GM13976 (cell line): ENCODE measurements at regions of chrX and their contacts with region 1.

Region 1: DNA sequence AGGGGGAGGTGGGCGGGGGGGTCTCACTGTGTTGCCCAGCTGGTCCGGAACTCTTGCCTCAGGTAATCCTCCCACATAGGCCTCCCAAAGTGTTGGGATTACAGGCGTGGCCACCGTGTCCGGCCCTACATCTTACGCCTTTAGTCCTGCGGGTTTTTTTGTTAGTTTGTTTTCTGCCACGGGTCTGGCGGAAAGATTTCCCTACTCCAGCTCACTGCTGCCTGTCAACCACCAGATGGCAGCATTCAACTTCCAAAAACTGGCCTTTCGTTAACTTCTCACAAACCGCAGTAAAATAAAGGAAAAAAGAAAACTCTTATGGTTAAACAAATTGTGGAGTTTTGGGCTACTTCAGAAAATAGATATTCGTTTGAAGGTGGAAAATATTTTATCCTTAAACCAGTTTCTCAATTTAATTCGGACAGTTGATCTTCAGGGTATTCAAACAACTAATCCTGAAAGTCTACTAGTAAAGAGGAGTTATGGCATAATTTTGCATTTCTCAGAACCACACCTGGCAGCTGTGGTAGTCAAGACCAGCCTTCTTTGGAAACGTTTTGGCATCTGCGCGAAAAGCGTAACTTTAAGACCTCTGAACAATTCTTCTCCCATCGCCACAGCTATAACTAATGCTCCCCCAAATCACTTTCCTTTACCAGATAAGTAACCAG is 41.1 kb downstream of the LUZP4 start:
- DNase-seq: peak; percentile 60
- CTCF ChIP-seq: peak; percentile 69

Region 2: DNA sequence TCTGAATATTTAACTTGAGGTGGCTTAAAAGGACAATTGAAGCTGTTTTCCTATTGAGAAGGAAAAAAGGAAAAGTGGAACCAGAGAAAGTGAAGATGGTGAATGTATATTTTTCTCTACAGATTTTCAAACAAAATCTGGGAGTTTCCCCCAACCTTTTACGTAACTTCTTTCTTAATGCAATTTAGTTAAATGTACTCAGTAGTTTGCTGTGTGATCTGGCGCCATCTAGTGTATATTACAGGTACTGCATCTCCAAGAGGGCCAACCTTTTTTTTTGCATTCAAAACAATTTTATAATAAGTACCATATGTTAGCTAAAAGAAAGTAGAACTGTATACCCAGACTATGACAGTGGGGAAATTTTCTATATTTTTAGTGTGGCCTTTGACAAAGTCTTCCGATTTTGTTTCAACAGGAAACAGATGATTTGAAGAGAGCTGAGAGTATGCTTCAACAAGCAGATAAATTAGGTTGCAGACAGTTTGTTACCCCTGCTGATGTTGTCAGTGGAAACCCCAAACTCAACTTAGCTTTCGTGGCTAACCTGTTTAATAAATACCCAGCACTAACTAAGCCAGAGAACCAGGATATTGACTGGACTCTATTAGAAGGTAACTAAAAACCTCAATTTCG is 312.4 kb after region 1 on chrX:
- in situ Hi-C with region 1: loop called (anchors 10 kb)
- DNase-seq: peak; percentile 40
- CTCF ChIP-seq: peak; percentile 88

Region 3: DNA sequence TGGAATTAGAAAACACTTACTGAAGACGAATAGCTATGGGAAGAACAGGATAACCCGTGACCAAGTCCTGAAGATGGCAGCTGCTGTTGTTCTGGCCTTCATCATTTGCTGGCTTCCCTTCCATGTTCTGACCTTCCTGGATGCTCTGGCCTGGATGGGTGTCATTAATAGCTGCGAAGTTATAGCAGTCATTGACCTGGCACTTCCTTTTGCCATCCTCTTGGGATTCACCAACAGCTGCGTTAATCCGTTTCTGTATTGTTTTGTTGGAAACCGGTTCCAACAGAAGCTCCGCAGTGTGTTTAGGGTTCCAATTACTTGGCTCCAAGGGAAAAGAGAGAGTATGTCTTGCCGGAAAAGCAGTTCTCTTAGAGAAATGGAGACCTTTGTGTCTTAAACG is 842.3 kb after region 1 on chrX:
- in situ Hi-C with region 1: no loop called
- DNase-seq: no peak
- CTCF ChIP-seq: no peak